A673 (cell line): ENCODE measurements at regions of chr6 and their contacts with region 1.

Region 1: GRCh38 chr6:2353412-2354137 is 108.2 kb upstream of the GMDS start:
- DNase-seq: peak; percentile 74
- H3K4me3 ChIP-seq: no peak overlapping the region
- H3K27ac ChIP-seq: no peak overlapping the region
- H3K4me1 ChIP-seq: no peaks in the 10 kb centered on the region
- H3K27me3 ChIP-seq: no peaks in the 10 kb centered on the region
- CTCF ChIP-seq: peak; percentile 84

Region 2: DNA sequence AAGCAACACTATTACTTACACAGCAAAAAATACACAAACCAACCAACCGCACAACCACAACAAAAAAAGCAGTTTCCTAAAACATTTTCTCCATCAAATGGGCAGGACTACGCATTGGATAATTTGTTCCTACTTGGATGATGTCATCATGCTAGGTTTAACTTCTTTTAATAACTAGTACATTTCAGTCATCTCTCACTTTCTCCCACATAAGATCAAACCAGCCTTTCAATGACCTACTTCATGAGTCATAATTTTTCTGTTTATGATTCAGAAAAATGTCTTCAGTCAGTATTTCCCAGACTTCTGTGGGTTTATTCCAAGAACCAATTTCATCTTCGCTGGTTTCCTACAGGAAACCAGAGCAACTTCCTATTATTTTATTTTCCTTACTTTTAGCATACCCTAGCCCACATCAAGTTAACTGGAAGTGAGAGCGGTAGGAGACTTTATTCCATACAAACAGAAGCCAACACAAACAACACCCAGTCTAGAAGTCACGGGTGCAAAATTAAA is 242.4 kb before region 1 on chr6:
- CTCF ChIA-PET with region 1: no interaction called
- POLR2A ChIA-PET with region 1: no interaction called
- intact Hi-C with region 1: loop called (anchors 10 kb)
- DNase-seq: no peak
- H3K4me3 ChIP-seq: no peak overlapping the region
- H3K27ac ChIP-seq: no peak overlapping the region
- H3K4me1 ChIP-seq: peaks cover 14% of the 10 kb centered on the region
- H3K27me3 ChIP-seq: no peaks in the 10 kb centered on the region
- CTCF ChIP-seq: no peak

Region 3: DNA sequence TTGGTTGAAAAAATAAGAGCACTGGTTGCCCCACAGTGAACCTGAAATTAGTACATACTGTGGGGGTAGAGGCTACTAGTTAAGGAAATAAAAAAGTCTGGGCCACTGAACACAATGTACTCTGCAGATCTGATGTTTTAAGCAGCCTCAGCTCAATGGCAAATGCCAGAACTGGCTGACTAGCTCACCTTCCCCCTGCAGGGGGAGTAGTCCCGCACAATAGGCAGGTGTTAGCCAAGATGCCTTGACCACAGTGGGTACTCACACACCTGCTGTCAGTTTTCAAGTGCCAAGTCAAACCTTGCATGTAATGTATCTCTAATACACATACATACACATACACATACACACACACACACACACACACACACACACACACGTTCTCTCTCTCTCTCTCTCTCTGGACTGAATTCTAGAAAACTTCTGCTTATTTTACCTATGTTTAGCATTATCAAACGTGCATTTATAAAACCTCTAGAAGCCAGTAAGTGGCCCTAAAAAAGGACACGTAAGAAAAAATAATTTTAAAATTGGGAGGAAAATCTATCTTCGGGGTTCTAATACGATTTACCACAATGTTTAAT is 144.3 kb before region 1 on chr6:
- CTCF ChIA-PET with region 1: interaction called, 3 read pairs
- POLR2A ChIA-PET with region 1: no interaction called
- intact Hi-C with region 1: loop called (anchors 5 kb)
- DNase-seq: peak; percentile 14
- H3K4me3 ChIP-seq: no peak overlapping the region
- H3K27ac ChIP-seq: no peak overlapping the region
- H3K4me1 ChIP-seq: peaks cover 6% of the 10 kb centered on the region
- H3K27me3 ChIP-seq: no peaks in the 10 kb centered on the region
- CTCF ChIP-seq: peak; percentile 52

Region 4: DNA sequence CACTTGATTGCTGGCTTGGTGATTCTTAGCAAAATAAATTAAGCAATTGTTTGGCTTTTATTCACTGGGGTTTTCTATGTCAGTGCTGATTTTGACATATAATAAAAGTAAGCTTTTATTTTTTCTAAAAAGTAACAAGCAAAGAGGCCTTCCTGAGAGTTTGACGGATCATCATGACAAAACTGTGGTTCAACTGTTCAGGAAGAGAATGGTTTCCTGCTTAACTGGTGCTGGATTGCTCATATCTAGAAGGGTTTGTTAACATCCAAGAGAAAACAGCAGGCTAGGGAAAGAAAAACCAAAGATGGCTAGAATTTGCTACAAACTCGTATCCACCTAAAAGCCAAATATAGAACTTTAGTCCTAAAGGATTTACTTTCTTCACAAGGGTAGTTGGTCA is 466.8 kb after region 1 on chr6:
- CTCF ChIA-PET with region 1: no interaction called
- POLR2A ChIA-PET with region 1: no interaction called
- intact Hi-C with region 1: no loop called
- DNase-seq: no peak
- H3K4me3 ChIP-seq: no peak overlapping the region
- H3K27ac ChIP-seq: no peak overlapping the region
- H3K4me1 ChIP-seq: no peaks in the 10 kb centered on the region
- H3K27me3 ChIP-seq: no peaks in the 10 kb centered on the region
- CTCF ChIP-seq: no peak

Region 5: DNA sequence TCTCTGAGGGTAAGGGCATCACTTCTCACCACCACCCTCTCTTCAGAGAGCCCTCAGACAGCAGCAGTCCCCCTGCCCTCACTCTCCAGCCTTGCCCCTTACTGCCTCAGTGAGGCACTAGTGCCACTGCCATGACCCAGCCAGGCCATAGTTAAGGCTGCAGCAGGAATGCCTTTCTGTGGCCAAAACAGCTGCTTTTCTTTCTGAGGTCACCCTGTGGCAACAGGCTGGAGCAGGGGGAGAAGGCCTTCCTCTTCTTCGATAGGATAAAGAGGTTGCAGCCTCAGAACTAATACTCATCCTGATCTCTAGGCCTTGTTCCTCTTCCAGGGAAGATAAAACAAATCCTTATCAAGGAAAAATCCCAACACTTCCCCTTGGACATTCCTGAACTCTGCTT is 1838.6 kb after region 1 on chr6:
- CTCF ChIA-PET with region 1: no interaction called
- POLR2A ChIA-PET with region 1: no interaction called
- intact Hi-C with region 1: no loop called
- DNase-seq: no peak
- H3K4me3 ChIP-seq: no peak overlapping the region
- H3K27ac ChIP-seq: no peak overlapping the region
- H3K4me1 ChIP-seq: no peaks in the 10 kb centered on the region
- H3K27me3 ChIP-seq: no peaks in the 10 kb centered on the region
- CTCF ChIP-seq: no peak